ENCODE measurements at regions of chr5 and their contacts with region 1.

Region 1: DNA sequence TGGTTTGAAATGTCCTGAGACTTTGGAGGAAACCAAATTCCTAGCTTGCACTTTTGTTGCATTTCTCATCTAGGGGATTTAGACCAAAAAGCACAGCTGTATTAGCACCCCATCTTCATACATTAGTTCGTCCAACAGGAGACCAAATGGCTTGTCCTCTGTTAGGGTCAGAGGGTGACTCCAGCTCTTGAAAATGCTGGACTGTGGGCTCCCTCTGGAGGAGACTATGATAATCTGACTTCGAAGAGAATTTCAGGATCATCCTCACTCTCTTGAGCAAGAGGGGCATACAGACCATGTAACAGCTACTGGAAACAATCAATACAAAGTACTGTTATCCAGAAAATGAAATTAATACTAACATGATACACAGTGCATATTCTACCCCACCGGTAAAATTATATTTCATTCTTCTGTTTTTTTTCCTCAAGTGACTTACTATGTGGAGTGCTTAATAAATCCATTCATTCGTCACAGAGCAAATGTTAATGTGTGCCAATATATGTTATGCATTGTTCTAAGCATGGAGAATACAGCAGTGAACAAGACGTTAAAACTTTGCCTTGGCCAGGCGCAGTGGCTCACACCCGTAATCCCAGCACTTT is 63.7 kb upstream of the PPP2CA start:
- H3K4me3 ChIP-seq: no peak overlapping the region
- H3K27ac ChIP-seq: no peak overlapping the region
- H3K4me1 ChIP-seq: no peaks in the 10 kb centered on the region
- CTCF ChIP-seq: peak; percentile 83

Region 2: GRCh38 chr5:134176511-134177368 is 112.9 kb before region 1 on chr5 and contains the start of gene SKP1:
- CTCF ChIA-PET with region 1: interaction called, 92 read pairs
- POLR2A ChIA-PET with region 1: interaction called, 12 read pairs
- H3K4me3 ChIP-seq: peak within 1 kb of the TSS; percentile 96
- H3K27ac ChIP-seq: peak within 1 kb of the TSS; percentile 98
- H3K4me1 ChIP-seq: peaks cover 10% of the 10 kb centered on the region
- CTCF ChIP-seq: 0 out of 2 replicates have a peak, but pooled peaks have one; percentile 42

Region 3: DNA sequence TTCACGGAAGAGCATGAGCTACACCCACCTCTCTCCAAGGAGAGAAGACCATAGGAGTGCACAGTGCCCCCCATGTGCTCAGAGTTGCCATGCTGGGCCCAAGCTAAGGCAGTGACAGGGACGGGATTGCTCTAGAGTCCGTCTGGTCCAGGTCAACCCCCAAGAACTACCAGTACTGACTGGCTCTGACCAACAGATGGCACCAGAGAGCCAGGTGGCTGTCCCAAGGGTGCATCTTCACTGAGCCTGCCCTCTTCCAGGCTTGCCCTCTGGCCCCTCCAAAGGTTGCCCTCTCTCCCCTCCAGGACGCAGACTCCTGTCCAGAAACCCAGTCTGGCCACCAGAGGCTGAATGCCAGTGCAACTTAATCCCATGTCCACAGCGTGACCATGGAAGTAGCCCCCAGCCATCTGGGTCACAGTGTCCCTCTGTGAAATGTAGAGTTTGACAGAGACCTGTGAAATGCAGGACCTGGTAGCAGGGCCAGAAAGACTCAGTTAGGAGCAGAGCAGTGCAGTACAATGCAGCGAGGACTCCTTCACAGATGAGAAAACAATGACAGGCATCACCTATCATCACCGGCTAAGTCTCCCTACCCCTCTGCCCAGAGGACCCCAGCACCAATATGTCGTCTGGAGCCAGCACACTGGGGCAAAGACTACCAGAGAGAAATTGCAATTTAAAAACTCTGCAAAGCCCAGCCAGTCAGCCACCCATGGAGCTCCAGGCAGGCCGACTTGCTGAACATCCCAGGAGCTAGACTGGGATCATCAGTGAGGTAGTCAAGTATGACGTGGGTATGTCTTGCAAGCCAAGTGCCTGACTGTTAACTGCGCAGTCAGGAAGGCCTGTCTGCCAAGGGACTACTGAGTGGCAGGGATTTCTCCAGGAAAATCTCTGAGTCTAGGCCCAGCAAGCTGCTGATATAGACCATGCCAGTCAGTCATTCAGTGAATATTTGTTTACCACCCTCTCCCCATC is 105.2 kb before region 1 on chr5:
- CTCF ChIA-PET with region 1: interaction called, 92 read pairs
- POLR2A ChIA-PET with region 1: no interaction called
- H3K4me3 ChIP-seq: no peak overlapping the region
- H3K27ac ChIP-seq: no peak overlapping the region
- H3K4me1 ChIP-seq: no peaks in the 10 kb centered on the region
- CTCF ChIP-seq: peak; percentile 90

Region 4: GRCh38 chr5:134195666-134196065 is 93.9 kb before region 1 on chr5:
- CTCF ChIA-PET with region 1: interaction called, 11 read pairs
- POLR2A ChIA-PET with region 1: no interaction called
- H3K4me3 ChIP-seq: no peak overlapping the region
- H3K27ac ChIP-seq: no peak overlapping the region
- H3K4me1 ChIP-seq: no peaks in the 10 kb centered on the region
- CTCF ChIP-seq: no peak

Measured in HEK293 (cell line).